AG04450 (cell line): ENCODE measurements at regions of chr7 and their contacts with region 1.

Region 1: GRCh38 chr7:29189743-29190201 is 4.8 kb upstream of the CHN2 start:
- DNase-seq: no peak
- H3K4me3 ChIP-seq: no peak overlapping the region
- H3K27ac ChIP-seq: no peak overlapping the region
- H3K27me3 ChIP-seq: peaks cover 20% of the 10 kb centered on the region
- CTCF ChIP-seq: peak; percentile 67

Region 2: GRCh38 chr7:29408841-29409243 is 219.1 kb after region 1 on chr7:
- CTCF ChIA-PET with region 1: interaction called, 46 read pairs
- POLR2A ChIA-PET with region 1: no interaction called
- DNase-seq: peak; percentile 16
- H3K4me3 ChIP-seq: no peak overlapping the region
- H3K27ac ChIP-seq: no peak overlapping the region
- H3K27me3 ChIP-seq: no peaks in the 10 kb centered on the region
- CTCF ChIP-seq: peak; percentile 82